B cell (primary cell): ENCODE measurements at regions of chr17 and their contacts with region 1.

Region 1: GRCh38 chr17:59440784-59441441 is 109.5 kb downstream of the YPEL2 start:
- DNase-seq: peak; percentile 89
- ATAC-seq: peak; percentile 86
- H3K4me3 ChIP-seq: no peak overlapping the region
- H3K4me3 Mint-ChIP-seq: no peak overlapping the region
- H3K27ac ChIP-seq: no peak overlapping the region
- H3K27ac Mint-ChIP-seq: no peak overlapping the region
- H3K4me1 ChIP-seq: peaks cover 42 to 43% of the 10 kb centered on the region in 2 donors
- H3K4me1 Mint-ChIP-seq: peaks cover 37% of the 10 kb centered on the region
- H3K27me3 ChIP-seq: no peaks in the 10 kb centered on the region
- H3K27me3 Mint-ChIP-seq: no peaks in the 10 kb centered on the region
- CTCF ChIP-seq: peak; percentile 84

Region 2: DNA sequence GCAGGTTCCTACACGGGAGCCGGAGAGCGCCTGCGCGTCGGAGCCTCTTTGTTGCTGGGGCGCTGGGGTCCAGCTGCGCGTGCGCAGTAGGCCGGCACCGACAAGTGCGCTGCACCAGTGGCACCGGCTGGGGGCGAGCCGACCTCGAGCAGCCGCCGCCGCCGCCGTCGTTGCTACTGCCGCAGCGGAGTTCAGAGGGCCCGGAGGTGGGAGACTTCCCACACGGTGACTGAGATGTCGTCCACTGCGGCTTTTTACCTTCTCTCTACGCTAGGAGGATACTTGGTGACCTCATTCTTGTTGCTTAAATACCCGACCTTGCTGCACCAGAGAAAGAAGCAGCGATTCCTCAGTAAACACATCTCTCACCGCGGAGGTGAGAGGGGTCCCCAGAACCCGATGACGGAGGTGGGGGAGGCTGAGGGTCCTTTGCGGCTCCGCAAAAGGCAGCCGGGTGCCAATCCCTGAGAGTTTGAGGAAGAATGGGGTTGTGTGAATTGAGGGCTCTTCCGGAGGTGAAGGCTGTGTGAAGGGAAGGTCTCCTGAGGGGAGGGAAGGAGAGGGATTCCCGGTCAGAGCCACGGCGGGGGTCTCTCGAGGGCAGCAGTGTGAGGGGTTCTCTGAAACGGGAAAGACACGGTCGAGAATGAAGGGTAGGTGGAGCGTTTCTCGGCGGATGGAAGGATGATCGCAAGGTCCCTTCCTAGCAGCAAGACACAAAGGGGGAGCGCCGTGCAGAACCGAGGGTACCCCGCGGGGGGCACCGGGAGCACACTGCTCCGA is 220.3 kb before region 1 on chr17 and contains the start of gene GDPD1:
- CTCF ChIA-PET with region 1: interaction called, 7 read pairs
- POLR2A ChIA-PET with region 1: no interaction called
- intact Hi-C with region 1: loop called (anchors 10 kb)
- DNase-seq: peak; percentile 97
- ATAC-seq: peak; percentile 99
- H3K4me3 ChIP-seq: peak within 1 kb of the TSS; percentile 84 to 100 (median 99)
- H3K4me3 Mint-ChIP-seq: peak within 1 kb of the TSS; percentile 100
- H3K27ac ChIP-seq: peak within 1 kb of the TSS; percentile 82 to 87
- H3K27ac Mint-ChIP-seq: peak within 1 kb of the TSS; percentile 93
- H3K4me1 ChIP-seq: peaks cover 3 to 12% of the 10 kb centered on the region in 2 donors
- H3K4me1 Mint-ChIP-seq: peaks cover 12% of the 10 kb centered on the region
- H3K27me3 ChIP-seq: no peaks in the 10 kb centered on the region
- H3K27me3 Mint-ChIP-seq: no peaks in the 10 kb centered on the region
- CTCF ChIP-seq: peak; percentile 72
- total RNA-seq, gene GDPD1: 2.7 and 2.8 TPM in 2 replicates

Region 3: GRCh38 chr17:59311130-59311920 is 129.6 kb before region 1 on chr17:
- CTCF ChIA-PET with region 1: interaction called, 300 read pairs
- POLR2A ChIA-PET with region 1: no interaction called
- intact Hi-C with region 1: loop called (anchors 1 kb)
- DNase-seq: peak; percentile 81
- ATAC-seq: peak; percentile 98
- H3K4me3 ChIP-seq: no peak overlapping the region
- H3K4me3 Mint-ChIP-seq: no peak overlapping the region
- H3K27ac ChIP-seq: no peak overlapping the region
- H3K27ac Mint-ChIP-seq: no peak overlapping the region
- H3K4me1 ChIP-seq: peaks cover 0 to 2% of the 10 kb centered on the region in 2 donors
- H3K4me1 Mint-ChIP-seq: no peaks in the 10 kb centered on the region
- H3K27me3 ChIP-seq: no peaks in the 10 kb centered on the region
- H3K27me3 Mint-ChIP-seq: no peaks in the 10 kb centered on the region
- CTCF ChIP-seq: peak; percentile 92

Region 4: DNA sequence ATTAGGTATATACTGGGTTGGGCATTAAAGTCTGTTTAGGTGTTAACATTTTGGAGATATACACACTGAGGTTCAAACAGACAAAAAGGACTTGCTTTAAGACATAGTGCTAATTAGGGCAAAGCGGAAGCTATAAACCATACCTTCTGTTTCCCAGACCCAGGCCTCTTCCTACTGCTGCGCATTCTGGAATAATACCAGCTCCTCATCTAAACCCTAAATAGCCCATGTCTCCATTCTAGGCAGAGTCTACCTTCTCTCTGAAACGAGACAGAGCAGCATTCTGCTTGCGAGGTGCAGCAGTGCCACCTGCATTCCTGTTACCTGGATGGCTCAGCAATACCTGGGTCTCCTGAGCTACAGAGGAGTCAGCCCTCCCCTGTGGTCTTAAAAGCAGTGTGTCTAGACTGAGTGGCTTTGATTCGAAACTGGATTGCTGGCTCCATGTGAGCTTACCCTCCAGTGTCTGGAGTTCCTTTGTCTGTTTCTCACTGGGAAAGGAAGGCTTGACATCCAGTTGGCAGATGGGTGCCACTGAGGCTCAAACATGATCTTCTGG is 103.1 kb before region 1 on chr17:
- CTCF ChIA-PET with region 1: interaction called, 358 read pairs
- POLR2A ChIA-PET with region 1: interaction called, 5 read pairs
- intact Hi-C with region 1: no loop called
- DNase-seq: no peak
- ATAC-seq: no peak
- H3K4me3 ChIP-seq: no peak overlapping the region
- H3K4me3 Mint-ChIP-seq: no peak overlapping the region
- H3K27ac ChIP-seq: no peak overlapping the region
- H3K27ac Mint-ChIP-seq: no peak overlapping the region
- H3K4me1 ChIP-seq: peaks cover 18 to 19% of the 10 kb centered on the region in 2 donors
- H3K4me1 Mint-ChIP-seq: peaks cover 64% of the 10 kb centered on the region
- H3K27me3 ChIP-seq: no peaks in the 10 kb centered on the region
- H3K27me3 Mint-ChIP-seq: no peaks in the 10 kb centered on the region
- CTCF ChIP-seq: no peak

Region 5: DNA sequence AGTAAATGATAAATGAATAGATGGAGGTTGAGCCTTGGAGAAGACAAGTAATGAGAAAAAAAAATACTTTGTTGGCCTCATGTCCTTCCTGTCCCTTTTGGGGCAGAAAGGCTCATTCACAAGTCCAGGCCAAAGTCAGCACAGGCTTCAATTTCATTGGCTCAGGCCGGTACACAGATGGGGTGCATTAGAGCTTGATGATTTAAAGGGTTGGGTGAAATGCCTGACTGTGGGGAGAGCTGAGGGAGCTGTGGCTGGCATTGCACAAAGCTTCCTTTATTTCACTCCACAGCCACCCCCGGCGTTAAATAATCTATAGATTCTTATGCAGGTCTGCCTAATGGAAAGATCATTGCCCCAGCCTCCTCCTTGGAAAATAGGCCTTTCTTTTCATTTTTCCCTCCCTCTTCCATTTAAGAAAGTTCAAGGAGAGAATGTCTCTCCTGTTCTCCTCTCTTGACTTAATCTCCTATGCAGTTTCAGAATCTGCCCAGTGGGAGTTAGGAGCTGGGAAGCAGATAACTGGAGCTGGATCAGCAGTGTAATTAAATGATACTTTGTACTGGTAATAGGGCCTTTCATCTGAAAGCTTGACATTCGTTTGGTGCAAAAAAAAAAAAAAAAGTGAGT is 85.1 kb before region 1 on chr17:
- CTCF ChIA-PET with region 1: interaction called, 14 read pairs
- POLR2A ChIA-PET with region 1: no interaction called
- intact Hi-C with region 1: no loop called
- DNase-seq: no peak
- ATAC-seq: no peak
- H3K4me3 ChIP-seq: no peak overlapping the region
- H3K4me3 Mint-ChIP-seq: no peak overlapping the region
- H3K27ac ChIP-seq: peak overlapping the region in 1 of 2 donors; percentile 16
- H3K27ac Mint-ChIP-seq: peak overlapping the region; percentile 33
- H3K4me1 ChIP-seq: peaks cover 40 to 48% of the 10 kb centered on the region in 2 donors
- H3K4me1 Mint-ChIP-seq: peaks cover 73% of the 10 kb centered on the region
- H3K27me3 ChIP-seq: no peaks in the 10 kb centered on the region
- H3K27me3 Mint-ChIP-seq: no peaks in the 10 kb centered on the region
- CTCF ChIP-seq: no peak

Region 6: DNA sequence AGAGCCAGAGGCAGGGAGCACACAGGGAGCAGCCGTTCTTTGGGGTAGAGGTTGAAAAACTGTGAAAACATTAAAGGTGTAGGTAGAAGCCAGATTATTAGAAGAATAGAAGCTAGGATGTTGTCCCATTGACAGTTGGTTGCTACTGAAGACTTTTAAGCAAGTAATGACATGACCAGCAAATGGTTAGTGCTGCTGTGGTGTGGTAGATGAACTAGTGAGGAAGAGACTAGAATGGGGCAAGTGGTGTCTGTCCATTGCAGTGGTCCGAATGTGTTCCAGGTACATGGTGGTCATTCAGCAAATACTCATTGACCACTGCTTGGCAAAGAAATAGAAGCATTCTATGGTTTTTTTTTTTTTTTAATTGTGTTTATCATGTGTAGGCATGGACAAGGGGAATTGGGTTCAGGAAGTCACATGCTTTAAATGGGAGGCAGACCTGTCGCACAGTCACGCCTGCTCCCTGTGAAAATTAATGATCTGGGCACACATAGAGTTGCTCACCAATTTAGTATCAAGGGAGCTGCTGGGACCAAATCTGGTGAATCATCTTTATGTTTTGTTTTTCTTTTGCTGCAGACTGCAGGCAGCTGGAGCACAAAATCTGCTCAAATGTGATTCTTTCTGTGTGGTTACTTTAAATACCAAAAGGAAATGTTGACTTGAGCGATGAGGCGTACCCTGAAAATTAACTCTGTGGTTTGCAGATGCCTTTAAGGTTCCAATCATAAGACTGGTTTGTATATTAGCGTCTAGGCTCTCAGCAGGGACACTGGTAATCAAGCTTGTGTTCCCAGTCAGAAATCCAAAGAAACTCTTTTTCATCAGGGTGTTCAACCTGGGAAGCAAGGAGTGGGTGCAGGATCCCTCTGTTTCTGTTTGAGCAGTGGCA is 78.8 kb before region 1 on chr17:
- CTCF ChIA-PET with region 1: interaction called, 12 read pairs
- POLR2A ChIA-PET with region 1: no interaction called
- intact Hi-C with region 1: loop called (anchors 2 kb)
- DNase-seq: peak; percentile 63
- ATAC-seq: peak; percentile 79
- H3K4me3 ChIP-seq: peak overlapping the region; percentile 18 to 59 (median 24)
- H3K4me3 Mint-ChIP-seq: peak overlapping the region; percentile 91
- H3K27ac ChIP-seq: peak overlapping the region; percentile 69 to 73
- H3K27ac Mint-ChIP-seq: peak overlapping the region; percentile 67
- H3K4me1 ChIP-seq: peaks cover 79 to 85% of the 10 kb centered on the region in 2 donors
- H3K4me1 Mint-ChIP-seq: peaks cover 79% of the 10 kb centered on the region
- H3K27me3 ChIP-seq: no peaks in the 10 kb centered on the region
- H3K27me3 Mint-ChIP-seq: no peaks in the 10 kb centered on the region
- CTCF ChIP-seq: no peak

Region 7: GRCh38 chr17:59427425-59427921 is 13.4 kb before region 1 on chr17:
- CTCF ChIA-PET with region 1: interaction called, 39 read pairs
- POLR2A ChIA-PET with region 1: no interaction called
- intact Hi-C with region 1: no loop called
- DNase-seq: no peak
- ATAC-seq: no peak
- H3K4me3 ChIP-seq: no peak overlapping the region
- H3K4me3 Mint-ChIP-seq: no peak overlapping the region
- H3K27ac ChIP-seq: no peak overlapping the region
- H3K27ac Mint-ChIP-seq: no peak overlapping the region
- H3K4me1 ChIP-seq: no peaks in the 10 kb centered on the region
- H3K4me1 Mint-ChIP-seq: peaks cover 2% of the 10 kb centered on the region
- H3K27me3 ChIP-seq: no peaks in the 10 kb centered on the region
- H3K27me3 Mint-ChIP-seq: peaks cover 3% of the 10 kb centered on the region
- CTCF ChIP-seq: no peak

Region 8: GRCh38 chr17:59542960-59543635 is 102.2 kb after region 1 on chr17:
- CTCF ChIA-PET with region 1: no interaction called
- POLR2A ChIA-PET with region 1: no interaction called
- intact Hi-C with region 1: no loop called
- DNase-seq: no peak
- ATAC-seq: no peak
- H3K4me3 ChIP-seq: no peak overlapping the region
- H3K4me3 Mint-ChIP-seq: no peak overlapping the region
- H3K27ac ChIP-seq: no peak overlapping the region
- H3K27ac Mint-ChIP-seq: no peak overlapping the region
- H3K4me1 ChIP-seq: no peaks in the 10 kb centered on the region
- H3K4me1 Mint-ChIP-seq: no peaks in the 10 kb centered on the region
- H3K27me3 ChIP-seq: no peaks in the 10 kb centered on the region
- H3K27me3 Mint-ChIP-seq: peaks cover 4% of the 10 kb centered on the region
- CTCF ChIP-seq: no peak